Activated naive CD4-positive, alpha-beta T cell treated with anti-CD3 and anti-CD28 coated beads, Interleukin-2, amount 10 ng/mL, durations not matched to agents 7 days and 5 days (primary cell): ENCODE measurements at regions of chr17 and their contacts with region 1.

Region 1: DNA sequence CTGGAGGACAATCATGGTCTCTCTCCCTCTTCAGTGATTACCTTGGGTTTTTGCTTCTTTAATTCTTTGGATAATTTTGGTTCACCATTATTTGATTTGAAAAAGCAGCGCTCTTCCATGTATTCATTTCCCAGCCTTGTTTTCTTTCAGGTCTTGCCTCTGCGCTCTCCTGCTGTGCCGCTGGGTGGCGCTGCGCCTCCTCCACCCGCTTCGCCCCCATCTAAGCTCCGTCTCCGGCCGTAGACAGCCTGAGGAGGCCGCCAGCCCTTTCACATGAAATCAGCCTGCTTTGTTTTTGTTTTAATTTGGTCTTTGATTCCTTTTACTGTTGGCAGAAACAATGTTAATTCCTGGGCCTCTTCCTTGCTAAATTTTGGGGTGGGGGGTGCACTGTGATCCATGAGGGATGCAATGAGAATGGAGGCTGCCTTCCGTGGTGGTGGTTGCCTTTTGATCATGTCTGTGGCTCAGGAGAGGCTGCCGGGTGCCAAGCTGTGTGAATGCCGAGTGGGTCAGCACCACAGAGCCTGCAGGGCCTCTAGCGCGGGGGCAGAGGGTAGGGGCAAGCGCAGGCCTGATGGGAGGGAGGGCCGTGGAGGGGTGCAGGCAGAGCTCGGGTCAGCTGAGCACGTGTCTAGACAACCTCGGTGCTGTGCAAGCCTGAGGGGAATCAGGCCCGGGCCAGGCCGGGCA is 64.1 kb downstream of the PLD6 start:
- DNase-seq: peak; percentile 65
- H3K4me3 Mint-ChIP-seq: no peak overlapping the region
- H3K27ac Mint-ChIP-seq: peak overlapping the region; percentile 60
- H3K4me1 Mint-ChIP-seq: peaks cover 7% of the 10 kb centered on the region
- H3K27me3 Mint-ChIP-seq: no peaks in the 10 kb centered on the region

Region 2: GRCh38 chr17:17313350-17313991 is 171.5 kb after region 1 on chr17:
- CTCF ChIA-PET with region 1: interaction called, 28 read pairs
- DNase-seq: peak; percentile 84
- H3K4me3 Mint-ChIP-seq: no peak overlapping the region
- H3K27ac Mint-ChIP-seq: no peak overlapping the region
- H3K4me1 Mint-ChIP-seq: peaks cover 6% of the 10 kb centered on the region
- H3K27me3 Mint-ChIP-seq: no peaks in the 10 kb centered on the region